Adrenal gland (tissue), 19 donors: ENCODE measurements at regions of chr12 and their contacts with region 1.

Region 1: DNA sequence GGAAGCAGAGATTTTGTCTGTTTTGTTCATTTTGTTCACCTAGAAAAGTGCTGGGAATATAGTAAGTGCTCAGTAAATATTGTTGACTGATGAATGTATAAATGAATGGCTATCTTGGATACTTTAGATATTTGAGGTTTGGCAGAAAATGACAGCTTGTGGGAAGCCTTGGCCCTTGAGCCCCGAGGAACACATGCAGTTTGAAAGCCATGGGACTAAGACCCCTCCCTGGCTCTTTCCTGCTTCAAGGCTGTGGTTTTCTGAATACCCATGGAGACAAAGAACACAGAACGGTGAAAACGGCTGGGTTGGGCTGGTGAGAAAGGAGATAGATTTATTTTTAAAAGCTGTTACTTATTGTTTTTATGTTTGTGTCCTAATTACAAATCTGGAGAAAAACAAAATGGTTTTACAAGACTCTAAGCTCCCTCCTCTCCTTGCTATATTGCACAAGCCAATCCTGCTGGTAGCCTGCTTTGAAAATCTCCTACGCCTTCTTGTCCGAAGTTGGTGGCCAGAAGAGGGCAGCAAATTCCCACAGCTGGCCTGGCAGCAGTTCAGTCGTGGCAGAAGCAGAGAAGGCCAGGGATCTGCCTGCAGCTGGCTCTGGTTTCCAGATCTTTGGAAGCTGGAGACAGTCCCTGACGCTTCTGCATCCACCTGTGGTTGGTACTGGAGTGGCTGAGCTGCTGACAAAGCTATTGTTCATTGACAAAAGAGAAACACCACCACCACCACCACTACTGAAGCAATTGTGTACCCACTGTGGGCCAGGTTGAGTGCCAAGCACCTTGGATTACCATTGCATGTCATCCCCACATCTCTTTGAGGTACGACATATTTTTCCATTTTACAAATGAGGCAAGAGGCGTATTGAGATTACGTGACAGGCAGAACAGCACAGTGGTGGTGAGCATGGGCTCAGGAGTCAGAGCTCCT is 5.2 kb upstream of the KRT85 start:
- DNase-seq: peak; percentile 82 to 94 (median 87)
- H3K4me3 ChIP-seq: no peak overlapping the region
- H3K27ac ChIP-seq: no peak overlapping the region
- H3K4me1 ChIP-seq: no peaks in the 10 kb centered on the region
- H3K27me3 ChIP-seq: no peaks in the 10 kb centered on the region
- CTCF ChIP-seq: peak; percentile 71 to 89 (median 85)
- POLR2A ChIP-seq: no peak

Region 2: DNA sequence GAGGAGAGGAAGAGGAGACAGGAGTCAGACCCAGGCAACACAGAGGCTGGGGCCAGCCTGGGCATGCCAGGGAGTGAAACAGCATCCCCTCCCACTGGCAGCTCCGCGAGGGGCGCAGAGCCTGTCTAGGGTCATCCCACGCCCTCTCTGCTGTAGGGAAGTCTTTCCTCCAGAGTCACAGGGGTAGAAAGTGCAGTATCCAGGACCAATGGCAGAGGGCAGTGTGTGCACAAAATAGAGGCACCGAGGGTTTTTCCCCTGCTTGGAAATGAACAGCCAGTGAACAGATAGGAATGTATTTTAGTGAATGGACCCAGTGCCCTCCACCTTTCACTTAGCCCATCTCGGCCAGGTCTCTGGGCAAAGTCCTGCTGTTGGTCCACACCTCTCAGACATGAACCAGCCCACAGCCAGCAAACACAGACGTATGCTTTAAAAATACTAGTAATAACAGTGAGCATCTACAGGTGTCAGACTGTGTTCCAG is 210.5 kb after region 1 on chr12:
- intact Hi-C with region 1: loop called (anchors 10 kb)
- DNase-seq: peak; percentile 48 to 83 (median 68)
- H3K4me3 ChIP-seq: no peak overlapping the region
- H3K27ac ChIP-seq: no peak overlapping the region
- H3K4me1 ChIP-seq: no peaks in the 10 kb centered on the region
- H3K27me3 ChIP-seq: no peaks in the 10 kb centered on the region
- CTCF ChIP-seq: peak; percentile 69 to 77 (median 74)
- POLR2A ChIP-seq: no peak